ENCODE measurements at regions of chr17 and their contacts with region 1.

Region 1: DNA sequence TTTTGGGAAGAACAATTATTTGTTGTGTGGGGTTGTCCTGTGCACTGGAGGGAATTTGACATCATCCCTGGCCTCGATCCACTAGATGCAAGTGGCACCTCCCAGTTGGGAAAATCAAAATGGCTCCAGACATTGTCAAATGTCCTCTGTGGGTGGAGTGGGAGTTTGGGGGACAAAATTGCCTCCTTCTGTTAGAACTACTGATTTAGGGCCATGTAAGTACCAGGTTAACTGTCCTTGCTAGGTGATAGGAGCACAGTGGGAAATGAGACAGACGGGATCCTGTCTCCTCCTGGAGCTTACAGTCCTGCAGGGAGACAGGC is 56.8 kb downstream of the ARHGAP23 start:
- DNase-seq: no peak
- ATAC-seq: no peak
- H3K4me3 ChIP-seq: no peak overlapping the region
- H3K27ac ChIP-seq: no peak overlapping the region
- H3K4me1 ChIP-seq: no peaks in the 10 kb centered on the region
- H3K27me3 ChIP-seq: no peaks in the 10 kb centered on the region
- CTCF ChIP-seq: no peak

Region 2: GRCh38 chr17:38550661-38551060 is 65.6 kb after region 1 on chr17:
- intact Hi-C with region 1: no loop called
- DNase-seq: no peak
- ATAC-seq: peak; percentile 33
- H3K4me3 ChIP-seq: no peak overlapping the region
- H3K27ac ChIP-seq: no peak overlapping the region
- H3K4me1 ChIP-seq: no peaks in the 10 kb centered on the region
- H3K27me3 ChIP-seq: peaks cover 0 to 44% of the 10 kb centered on the region in 2 donors
- CTCF ChIP-seq: no peak

Region 3: DNA sequence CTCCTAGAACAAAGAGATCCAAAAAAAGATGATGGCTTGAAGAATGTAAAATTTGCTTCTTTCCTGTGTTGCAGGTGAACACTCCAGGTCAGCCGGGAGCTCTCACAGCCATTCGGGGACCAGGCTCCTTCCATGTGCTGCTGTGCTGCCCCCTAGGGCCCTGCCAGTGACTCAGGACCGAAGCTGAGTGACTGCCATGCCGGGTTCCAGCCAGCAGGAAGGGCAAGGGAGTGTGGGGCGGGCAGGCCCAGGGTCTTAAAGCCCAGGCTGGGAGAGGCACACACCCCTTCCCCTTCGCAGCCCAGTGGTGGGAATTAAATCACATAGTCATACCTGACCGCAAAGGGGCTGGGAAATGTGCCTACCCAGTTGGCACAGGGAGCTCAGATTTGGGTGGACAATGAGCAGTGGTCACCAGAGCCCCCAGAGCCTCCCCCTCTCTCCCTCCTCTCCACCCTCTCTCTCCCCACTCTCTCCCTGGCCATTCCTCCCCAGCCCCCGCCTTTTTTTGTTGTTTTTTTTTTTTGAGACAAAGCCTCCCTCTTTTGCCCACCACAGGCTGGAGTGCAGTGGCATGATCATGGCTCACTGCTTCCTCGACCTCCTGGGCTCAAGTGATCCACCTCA is 178.1 kb after region 1 on chr17:
- intact Hi-C with region 1: loop called in 1 of 2 experiments (anchors 5 kb)
- DNase-seq: peak in 3 of 4 donors; percentile 63 to 86 (median 64)
- ATAC-seq: peak; percentile 81
- H3K4me3 ChIP-seq: no peak overlapping the region
- H3K27ac ChIP-seq: no peak overlapping the region
- H3K4me1 ChIP-seq: no peaks in the 10 kb centered on the region
- H3K27me3 ChIP-seq: peaks cover 0 to 23% of the 10 kb centered on the region in 2 donors
- CTCF ChIP-seq: peak; percentile 50 to 61